ENCODE measurements at regions of chr3 and their contacts with region 1.

Region 1: DNA sequence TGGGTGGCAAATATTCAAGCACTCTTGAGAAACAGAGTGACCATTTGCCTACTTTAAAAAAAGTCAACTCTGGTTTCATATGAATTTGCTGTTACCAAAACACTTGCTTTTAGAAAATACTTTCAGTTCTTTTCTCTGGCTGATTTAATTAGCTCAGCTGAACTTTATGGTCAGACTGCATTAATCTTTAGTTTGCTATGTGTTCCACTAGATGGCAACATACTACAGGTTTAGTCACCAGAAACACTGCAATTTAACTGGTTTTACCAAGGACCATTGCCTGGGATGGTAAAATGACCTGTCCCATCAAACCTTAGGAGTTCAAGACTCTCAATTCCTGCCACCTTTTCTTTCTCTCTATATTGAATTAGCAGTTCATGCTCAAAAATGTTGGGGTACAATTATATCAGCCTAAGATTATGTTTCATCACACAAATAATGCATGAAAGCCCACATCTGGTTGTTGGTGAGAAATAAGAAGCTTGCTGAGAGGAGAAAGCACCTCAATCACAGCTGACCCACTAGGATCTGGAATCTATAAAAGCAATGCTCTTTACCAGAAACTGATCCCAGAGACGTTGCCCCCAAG is 14.2 kb downstream of the EIF4E3 start:
- DNase-seq: peak; percentile 33
- H3K4me3 ChIP-seq: no peak overlapping the region
- H3K27ac ChIP-seq: no peak overlapping the region
- H3K4me1 ChIP-seq: peaks cover 6% of the 10 kb centered on the region
- H3K27me3 ChIP-seq: no peaks in the 10 kb centered on the region
- CTCF ChIP-seq: peak; percentile 63 to 64

Region 2: GRCh38 chr3:72270072-72270681 is 559.2 kb after region 1 on chr3:
- CTCF ChIA-PET with region 1: interaction called, 3 read pairs
- dilution Hi-C with region 1: no loop called
- in situ Hi-C with region 1: no loop called
- intact Hi-C with region 1: loop called (anchors 5 kb)
- DNase-seq: peak; percentile 67
- H3K4me3 ChIP-seq: no peak overlapping the region
- H3K27ac ChIP-seq: no peak overlapping the region
- H3K4me1 ChIP-seq: peaks cover 10% of the 10 kb centered on the region
- H3K27me3 ChIP-seq: peaks cover 4% of the 10 kb centered on the region
- CTCF ChIP-seq: no peak

Measured in mammary epithelial cell (primary cell).